ENCODE measurements at regions of chr4 and their contacts with region 1.

Region 1: DNA sequence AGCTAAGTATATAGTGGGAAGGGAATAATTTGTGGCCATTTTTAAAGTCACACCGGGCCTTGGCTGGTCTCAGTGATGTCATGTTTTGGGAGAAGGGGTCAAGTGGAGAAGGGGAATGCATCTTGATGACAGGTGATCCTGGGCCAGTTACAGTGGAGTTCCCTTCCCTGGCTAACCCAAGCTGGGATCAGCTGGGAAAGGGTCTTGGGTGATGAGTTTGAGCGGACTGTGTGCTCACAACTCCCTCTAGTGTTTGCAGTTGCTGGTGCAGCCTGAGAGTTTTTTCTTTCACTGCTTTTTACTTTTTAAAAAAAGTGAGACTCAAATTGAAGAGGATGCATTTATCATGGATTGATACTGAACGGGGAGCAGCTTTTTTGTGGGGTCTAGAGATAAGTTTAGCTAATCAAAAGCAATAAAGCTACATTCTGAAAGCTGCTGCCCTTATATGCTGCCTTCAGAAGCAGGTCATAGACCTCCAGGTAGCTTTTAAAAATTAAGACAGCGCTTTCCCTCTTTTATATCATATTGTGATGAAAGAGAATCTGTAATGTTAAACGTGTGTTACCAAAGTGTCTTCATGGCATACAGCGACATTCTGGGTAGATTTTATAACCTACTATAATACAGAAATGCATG is 164.7 kb downstream of the DCLK2 start:
- DNase-seq: peak; percentile 74
- H3K4me3 ChIP-seq: peak overlapping the region in 1 of 2 experiments; percentile 18; a peak in 1 of 4 replicates
- H3K27ac ChIP-seq: no peak overlapping the region; a peak in 1 of 4 replicates
- H3K4me1 ChIP-seq: peaks cover 3 to 19% of the 10 kb centered on the region in 2 experiments; a peak in 3 of 4 replicates
- H3K27me3 ChIP-seq: no peaks in the 10 kb centered on the region
- CTCF ChIP-seq: peak; percentile 93
- EP300 ChIP-seq: no peak
- RAD21 ChIP-seq: peak; percentile 95

Region 2: DNA sequence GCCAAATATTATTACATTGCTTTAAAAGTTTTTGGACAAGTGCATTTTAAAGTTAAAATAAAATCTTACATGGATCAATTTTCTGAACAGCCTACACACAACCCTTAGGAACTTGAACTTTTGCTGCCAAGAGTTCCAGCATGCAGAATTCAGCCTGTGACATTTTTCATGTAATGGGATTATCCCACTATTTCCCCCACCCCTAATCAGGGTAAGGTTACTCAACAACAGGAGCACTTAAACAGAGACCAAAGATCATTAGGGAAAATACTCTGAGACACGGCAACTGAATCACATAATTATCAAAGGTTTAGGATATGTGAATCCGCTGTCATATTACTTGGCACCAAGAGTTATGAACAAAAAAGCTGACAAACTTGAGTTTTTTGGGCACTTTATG is 474.5 kb before region 1 on chr4:
- CTCF ChIA-PET with region 1: no interaction called
- POLR2A ChIA-PET with region 1: no interaction called
- DNase-seq: no peak
- H3K4me3 ChIP-seq: no peak overlapping the region
- H3K27ac ChIP-seq: no peak overlapping the region
- H3K4me1 ChIP-seq: no peaks in the 10 kb centered on the region
- H3K27me3 ChIP-seq: no peaks in the 10 kb centered on the region; the same call in 1 of the 2 replicates
- CTCF ChIP-seq: no peak
- EP300 ChIP-seq: no peak
- RAD21 ChIP-seq: no peak

Region 3: DNA sequence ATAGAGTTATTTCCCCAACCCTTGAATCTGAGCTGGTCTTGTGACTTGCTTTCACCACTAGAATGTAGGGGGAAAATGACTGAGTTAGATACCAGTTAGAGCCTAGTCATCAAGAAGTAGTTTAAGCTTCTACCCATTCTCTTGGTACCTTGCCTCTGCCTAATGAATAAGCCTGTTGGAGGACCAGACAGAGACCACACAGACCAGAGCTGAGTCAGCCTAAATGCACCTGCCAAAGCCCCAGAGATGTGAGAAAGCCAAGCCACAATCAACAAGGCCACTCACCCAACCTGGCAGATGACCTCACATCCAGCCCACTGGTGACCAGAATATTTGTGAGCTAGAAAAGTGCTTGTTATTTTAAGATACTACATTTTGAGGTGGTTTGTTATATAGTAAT is 249.9 kb before region 1 on chr4:
- CTCF ChIA-PET with region 1: interaction called, 25 read pairs
- POLR2A ChIA-PET with region 1: no interaction called
- DNase-seq: no peak
- H3K4me3 ChIP-seq: no peak overlapping the region
- H3K27ac ChIP-seq: no peak overlapping the region
- H3K4me1 ChIP-seq: peaks cover 3 to 4% of the 10 kb centered on the region in 2 experiments; a peak in 3 of 4 replicates
- H3K27me3 ChIP-seq: no peaks in the 10 kb centered on the region
- CTCF ChIP-seq: no peak
- EP300 ChIP-seq: no peak
- RAD21 ChIP-seq: no peak

Region 4: GRCh38 chr4:150023489-150023888 is 219.4 kb before region 1 on chr4:
- CTCF ChIA-PET with region 1: interaction called, 11 read pairs
- POLR2A ChIA-PET with region 1: no interaction called
- DNase-seq: no peak
- H3K4me3 ChIP-seq: no peak overlapping the region
- H3K27ac ChIP-seq: no peak overlapping the region
- H3K4me1 ChIP-seq: no peaks in the 10 kb centered on the region; a peak in 1 of 4 replicates
- H3K27me3 ChIP-seq: no peaks in the 10 kb centered on the region
- CTCF ChIP-seq: no peak
- EP300 ChIP-seq: no peak
- RAD21 ChIP-seq: no peak

Region 5: DNA sequence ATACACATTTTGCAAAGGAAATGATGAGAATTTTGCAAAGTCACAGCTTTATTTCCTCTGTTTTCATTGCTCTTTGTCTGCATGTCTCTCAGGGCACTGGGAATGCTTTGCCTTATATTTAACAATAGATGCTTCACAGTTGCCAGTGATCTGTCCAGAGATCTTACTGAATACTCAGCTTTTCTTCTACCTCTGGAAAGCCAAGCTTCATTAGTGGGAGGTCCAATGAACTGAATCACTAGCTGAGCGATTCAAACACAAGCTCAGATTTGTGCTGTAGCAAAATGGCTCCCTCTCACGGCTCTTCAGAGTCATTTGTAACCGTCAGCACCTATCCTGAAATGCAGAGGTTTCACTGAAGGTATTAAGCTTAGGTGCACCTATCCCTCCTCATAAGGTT is 25.7 kb before region 1 on chr4:
- CTCF ChIA-PET with region 1: interaction called, 20 read pairs
- POLR2A ChIA-PET with region 1: no interaction called
- DNase-seq: no peak
- H3K4me3 ChIP-seq: no peak overlapping the region
- H3K27ac ChIP-seq: peak overlapping the region; percentile 50 to 56; a peak in 3 of 4 replicates
- H3K4me1 ChIP-seq: peaks cover 0 to 17% of the 10 kb centered on the region in 2 experiments; a peak in 3 of 4 replicates
- H3K27me3 ChIP-seq: no peaks in the 10 kb centered on the region
- CTCF ChIP-seq: peak; percentile 69
- EP300 ChIP-seq: peak in 1 of 2 experiments; percentile 39; a peak in 1 of 4 replicates
- RAD21 ChIP-seq: peak; percentile 66

Region 6: GRCh38 chr4:150264595-150265161 is 21.7 kb after region 1 on chr4:
- CTCF ChIA-PET with region 1: interaction called, 11 read pairs
- POLR2A ChIA-PET with region 1: no interaction called
- DNase-seq: no peak
- H3K4me3 ChIP-seq: no peak overlapping the region
- H3K27ac ChIP-seq: no peak overlapping the region
- H3K4me1 ChIP-seq: peaks cover 0 to 4% of the 10 kb centered on the region in 2 experiments; a peak in 1 of 4 replicates
- H3K27me3 ChIP-seq: no peaks in the 10 kb centered on the region
- CTCF ChIP-seq: no peak
- EP300 ChIP-seq: no peak
- RAD21 ChIP-seq: no peak

Region 7: GRCh38 chr4:150348079-150348478 is 105.1 kb after region 1 on chr4:
- CTCF ChIA-PET with region 1: no interaction called
- POLR2A ChIA-PET with region 1: no interaction called
- DNase-seq: no peak
- H3K4me3 ChIP-seq: no peak overlapping the region
- H3K27ac ChIP-seq: peak overlapping the region in 1 of 2 experiments; percentile 10; a peak in 1 of 4 replicates
- H3K4me1 ChIP-seq: peaks cover 0 to 8% of the 10 kb centered on the region in 2 experiments; a peak in 1 of 4 replicates
- H3K27me3 ChIP-seq: no peaks in the 10 kb centered on the region
- CTCF ChIP-seq: no peak
- EP300 ChIP-seq: peak in 1 of 2 experiments; percentile 24; a peak in 1 of 4 replicates
- RAD21 ChIP-seq: no peak

Measured in SK-N-SH (cell line).